Activated B cell treated with CpG ODN at 0.5 μM for 24 hours (primary cell): ENCODE measurements at regions of chr2 and their contacts with region 1.

Region 1: GRCh38 chr2:210195101-210195852 is 24.1 kb upstream of the KANSL1L start:
- DNase-seq: no peak
- ATAC-seq: no peak
- H3K4me3 Mint-ChIP-seq: no peak overlapping the region
- H3K27ac Mint-ChIP-seq: no peak overlapping the region
- H3K4me1 Mint-ChIP-seq: no peaks in the 10 kb centered on the region
- H3K27me3 Mint-ChIP-seq: peaks cover 2% of the 10 kb centered on the region
- CTCF ChIP-seq: no peak

Region 2: DNA sequence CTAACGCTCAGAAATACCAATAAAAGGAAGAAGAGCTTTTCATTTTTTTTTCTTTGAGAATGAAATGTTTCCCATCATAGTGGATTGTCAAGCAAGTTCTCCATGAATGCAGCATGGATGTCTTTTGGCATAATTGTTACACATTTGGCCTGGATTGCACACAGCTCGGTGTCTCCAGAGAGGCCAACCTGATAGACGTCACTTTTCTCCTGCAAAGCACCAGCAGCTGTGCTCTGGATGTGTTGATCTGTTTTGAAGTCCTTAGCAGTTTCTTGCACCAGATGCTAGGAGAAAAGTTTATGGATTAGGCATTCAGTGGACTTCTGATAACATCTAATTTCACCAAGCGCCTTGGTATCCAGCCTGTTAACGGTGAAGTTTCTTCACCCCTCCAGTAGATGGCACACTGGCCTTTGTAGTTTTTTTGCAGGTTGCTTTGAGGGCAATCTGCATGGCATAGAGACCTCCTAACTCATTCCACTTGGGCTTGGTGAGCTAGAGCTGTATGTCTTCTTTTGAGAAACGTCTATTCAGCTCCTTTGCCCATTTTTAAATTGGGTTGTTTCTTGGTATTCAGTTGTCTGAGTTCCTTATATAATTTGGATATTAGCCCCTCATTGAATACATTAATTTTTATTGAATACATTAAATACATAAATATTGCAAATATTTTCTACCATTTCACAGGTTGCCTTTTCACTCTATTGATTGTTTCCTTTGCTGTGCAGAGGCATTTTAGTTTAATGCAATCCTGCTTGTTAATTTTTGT is 1728.9 kb before region 1 on chr2:
- CTCF ChIA-PET with region 1: no interaction called
- POLR2A ChIA-PET with region 1: no interaction called
- intact Hi-C with region 1: loop called (anchors 10 kb)
- DNase-seq: no peak
- ATAC-seq: no peak
- H3K4me3 Mint-ChIP-seq: no peak overlapping the region
- H3K27ac Mint-ChIP-seq: no peak overlapping the region
- H3K4me1 Mint-ChIP-seq: no peaks in the 10 kb centered on the region
- H3K27me3 Mint-ChIP-seq: peaks cover 16% of the 10 kb centered on the region
- CTCF ChIP-seq: no peak

Region 3: DNA sequence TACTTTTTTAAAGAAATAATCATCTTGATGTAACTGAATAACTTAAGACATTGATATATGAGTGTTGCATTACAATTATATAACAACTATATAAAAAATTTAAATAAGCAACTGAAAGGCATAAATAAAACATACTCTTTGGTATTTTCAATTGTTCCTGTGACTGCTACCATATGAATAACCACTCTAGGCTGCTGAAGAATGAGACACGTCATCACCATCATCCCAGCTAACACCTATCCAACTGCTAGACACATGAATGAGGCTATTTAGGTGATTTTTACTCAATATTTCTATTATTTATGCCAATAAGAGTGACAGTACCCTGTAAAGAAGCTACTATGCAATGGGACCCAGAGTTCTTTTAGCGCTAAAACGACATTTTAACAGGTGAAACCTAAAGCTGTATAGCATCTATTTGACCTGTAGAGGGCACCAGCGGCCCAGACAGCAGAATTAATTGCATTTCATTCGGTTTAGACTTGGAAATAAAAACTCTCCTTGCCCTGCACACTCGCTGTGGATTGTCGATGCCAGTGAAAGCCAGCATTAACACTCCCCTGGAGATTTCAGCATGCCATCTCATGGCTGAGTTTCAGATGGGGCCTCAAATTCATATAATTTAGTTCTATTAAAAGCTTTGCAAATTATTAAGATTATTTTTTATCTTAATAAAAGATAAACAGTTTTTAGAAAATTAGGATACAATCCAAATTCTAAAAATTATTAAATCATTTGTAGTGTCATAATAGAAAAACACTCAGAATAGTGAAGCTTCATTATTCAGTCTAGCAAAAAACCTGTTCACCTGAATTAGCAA is 860.9 kb before region 1 on chr2:
- CTCF ChIA-PET with region 1: interaction called, 12 read pairs
- POLR2A ChIA-PET with region 1: no interaction called
- intact Hi-C with region 1: loop called (anchors 1 kb)
- DNase-seq: no peak
- ATAC-seq: peak; percentile 56
- H3K4me3 Mint-ChIP-seq: no peak overlapping the region
- H3K27ac Mint-ChIP-seq: no peak overlapping the region
- H3K4me1 Mint-ChIP-seq: no peaks in the 10 kb centered on the region
- H3K27me3 Mint-ChIP-seq: peaks cover 4% of the 10 kb centered on the region
- CTCF ChIP-seq: peak; percentile 97

Region 4: DNA sequence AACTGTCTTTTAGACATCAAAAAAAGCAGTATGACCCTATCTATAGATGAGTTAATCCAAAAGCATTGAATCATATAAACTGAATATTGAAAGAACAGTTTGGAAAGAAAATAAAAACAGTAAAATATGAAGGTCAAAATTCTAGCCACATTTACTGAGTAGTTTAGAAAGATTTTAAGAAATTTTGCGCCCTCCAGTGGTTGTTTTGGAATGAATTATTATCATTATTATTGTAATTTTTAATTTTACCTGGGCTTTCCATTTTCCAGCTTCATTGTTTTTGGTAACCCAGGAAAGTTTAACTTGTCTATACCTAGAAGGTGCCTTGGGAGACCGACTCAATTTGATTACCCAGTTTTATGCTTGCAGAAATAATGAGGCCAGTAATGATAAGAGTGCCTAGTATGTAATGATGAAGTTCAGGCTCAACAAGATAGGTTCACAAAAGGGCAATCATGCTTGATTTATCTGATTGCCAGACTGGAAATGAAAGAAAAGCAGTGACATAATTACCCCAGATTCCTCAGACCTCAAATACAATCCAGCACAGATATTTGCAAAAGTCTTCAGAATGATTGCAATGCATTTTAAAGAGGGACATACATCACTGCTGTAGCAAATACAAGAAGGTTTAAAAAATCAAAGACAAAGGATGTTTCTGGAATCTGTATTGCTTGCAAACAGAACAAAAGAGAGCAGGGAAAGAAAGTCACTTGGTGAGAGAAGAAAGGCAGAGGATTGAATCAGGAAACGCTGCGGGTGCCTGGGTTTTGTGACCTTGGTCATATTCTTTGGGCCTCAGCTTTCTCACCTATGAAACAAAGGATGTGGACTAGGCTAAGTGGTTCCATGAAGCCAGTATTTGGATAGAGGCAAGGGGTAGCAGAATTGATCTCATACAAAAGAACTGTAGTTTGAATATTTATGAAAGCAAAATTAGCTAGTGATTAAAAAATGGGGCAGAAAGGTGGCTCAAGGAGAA is 617.6 kb before region 1 on chr2:
- CTCF ChIA-PET with region 1: no interaction called
- POLR2A ChIA-PET with region 1: no interaction called
- intact Hi-C with region 1: loop called (anchors 10 kb)
- DNase-seq: no peak
- ATAC-seq: no peak
- H3K4me3 Mint-ChIP-seq: no peak overlapping the region
- H3K27ac Mint-ChIP-seq: no peak overlapping the region
- H3K4me1 Mint-ChIP-seq: peaks cover 8% of the 10 kb centered on the region
- H3K27me3 Mint-ChIP-seq: no peaks in the 10 kb centered on the region
- CTCF ChIP-seq: no peak

Region 5: GRCh38 chr2:209977386-209978239 is 217.7 kb before region 1 on chr2:
- CTCF ChIA-PET with region 1: interaction called, 40 read pairs
- POLR2A ChIA-PET with region 1: no interaction called
- intact Hi-C with region 1: loop called (anchors 1 kb)
- DNase-seq: no peak
- ATAC-seq: no peak
- H3K4me3 Mint-ChIP-seq: no peak overlapping the region
- H3K27ac Mint-ChIP-seq: no peak overlapping the region
- H3K4me1 Mint-ChIP-seq: no peaks in the 10 kb centered on the region
- H3K27me3 Mint-ChIP-seq: peaks cover 8% of the 10 kb centered on the region
- CTCF ChIP-seq: peak; percentile 54

Region 6: GRCh38 chr2:210072922-210073509 is 122.3 kb before region 1 on chr2:
- CTCF ChIA-PET with region 1: interaction called, 5 read pairs
- POLR2A ChIA-PET with region 1: no interaction called
- intact Hi-C with region 1: loop called (anchors 1 kb)
- DNase-seq: no peak
- ATAC-seq: no peak
- H3K4me3 Mint-ChIP-seq: no peak overlapping the region
- H3K27ac Mint-ChIP-seq: no peak overlapping the region
- H3K4me1 Mint-ChIP-seq: no peaks in the 10 kb centered on the region
- H3K27me3 Mint-ChIP-seq: no peaks in the 10 kb centered on the region
- CTCF ChIP-seq: no peak

Region 7: DNA sequence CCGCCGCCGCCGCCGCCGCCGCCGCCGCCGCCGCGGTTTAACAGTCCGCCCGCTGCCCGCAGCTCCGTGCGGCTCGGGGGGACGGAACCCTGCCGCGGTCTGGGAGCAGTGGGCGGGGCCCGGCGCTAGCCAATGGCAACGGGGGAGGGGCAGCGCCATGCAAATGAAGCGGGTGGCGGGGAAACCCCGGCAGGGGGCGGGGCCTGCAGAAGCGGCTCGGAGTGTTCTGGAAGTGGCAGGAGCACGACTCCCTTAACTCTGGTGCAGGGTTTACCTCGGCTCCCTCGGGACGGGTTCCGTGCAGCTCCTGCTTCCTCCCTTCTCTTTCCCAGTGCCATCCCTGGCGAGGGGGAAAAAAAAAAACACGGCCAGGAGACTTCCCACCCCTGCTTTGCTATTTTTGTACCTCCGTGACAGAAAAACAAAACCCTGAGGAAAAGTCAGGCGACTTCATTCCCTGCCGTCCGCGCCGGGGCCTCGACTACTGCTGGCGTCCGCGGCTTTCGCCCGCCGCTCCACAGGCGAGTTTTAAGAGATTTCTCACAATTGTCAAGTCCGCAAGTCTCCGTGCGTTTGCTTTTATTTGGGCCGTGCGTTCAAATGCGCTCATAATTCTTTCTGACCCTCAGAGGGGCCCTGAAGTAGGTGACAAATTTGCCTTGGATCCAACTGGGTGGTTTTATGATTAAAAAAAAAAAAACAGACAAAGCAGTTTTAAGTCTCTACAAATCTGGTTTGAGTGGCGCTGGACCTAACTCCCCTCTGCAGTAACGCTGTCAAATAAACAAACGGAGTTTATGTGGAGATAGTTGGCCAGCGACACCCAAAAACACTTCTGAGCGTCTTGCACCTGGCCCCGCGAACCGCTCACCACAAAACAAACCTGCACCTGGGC is 23.7 kb before region 1 on chr2 and contains the start of gene KANSL1L:
- CTCF ChIA-PET with region 1: interaction called, 3 read pairs
- POLR2A ChIA-PET with region 1: no interaction called
- intact Hi-C with region 1: loop called (anchors 2 kb)
- DNase-seq: peak; percentile 99
- ATAC-seq: peak; percentile 83
- H3K4me3 Mint-ChIP-seq: peak within 1 kb of the TSS; percentile 97
- H3K27ac Mint-ChIP-seq: peak within 1 kb of the TSS; percentile 94
- H3K4me1 Mint-ChIP-seq: peaks cover 24% of the 10 kb centered on the region
- H3K27me3 Mint-ChIP-seq: peaks cover 8% of the 10 kb centered on the region
- CTCF ChIP-seq: no peak
- total RNA-seq, gene KANSL1L: 13.1 and 14.2 TPM in 2 replicates

Region 8: DNA sequence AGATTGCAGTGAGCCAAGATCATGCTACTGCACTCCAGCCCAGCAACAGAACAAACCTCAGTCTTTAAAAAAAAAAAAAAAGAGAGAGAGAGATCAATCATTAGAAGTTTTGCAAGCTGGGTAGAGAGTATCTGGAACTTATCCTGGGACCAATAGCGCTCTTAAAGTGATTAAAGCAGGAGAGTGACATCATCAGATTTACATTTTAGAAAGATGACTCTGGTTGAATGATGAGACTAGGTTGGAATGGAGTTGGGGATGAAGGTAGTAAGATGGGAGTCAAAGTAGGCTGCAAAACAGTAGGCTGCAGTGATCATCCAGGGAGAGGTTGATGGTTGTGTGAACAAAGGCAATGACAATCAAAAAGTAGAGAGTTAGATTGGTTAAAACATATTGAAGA is 81.9 kb after region 1 on chr2:
- CTCF ChIA-PET with region 1: no interaction called
- POLR2A ChIA-PET with region 1: no interaction called
- intact Hi-C with region 1: no loop called
- DNase-seq: no peak
- ATAC-seq: no peak
- H3K4me3 Mint-ChIP-seq: no peak overlapping the region
- H3K27ac Mint-ChIP-seq: no peak overlapping the region
- H3K4me1 Mint-ChIP-seq: no peaks in the 10 kb centered on the region
- H3K27me3 Mint-ChIP-seq: no peaks in the 10 kb centered on the region
- CTCF ChIP-seq: no peak

Region 9: GRCh38 chr2:210302326-210302725 is 107.0 kb after region 1 on chr2:
- CTCF ChIA-PET with region 1: no interaction called
- POLR2A ChIA-PET with region 1: no interaction called
- intact Hi-C with region 1: no loop called
- DNase-seq: no peak
- ATAC-seq: no peak
- H3K4me3 Mint-ChIP-seq: no peak overlapping the region
- H3K27ac Mint-ChIP-seq: no peak overlapping the region
- H3K4me1 Mint-ChIP-seq: no peaks in the 10 kb centered on the region
- H3K27me3 Mint-ChIP-seq: no peaks in the 10 kb centered on the region
- CTCF ChIP-seq: no peak